PC-9 (cell line): ENCODE measurements at regions of chr14 and their contacts with region 1.

Region 1: DNA sequence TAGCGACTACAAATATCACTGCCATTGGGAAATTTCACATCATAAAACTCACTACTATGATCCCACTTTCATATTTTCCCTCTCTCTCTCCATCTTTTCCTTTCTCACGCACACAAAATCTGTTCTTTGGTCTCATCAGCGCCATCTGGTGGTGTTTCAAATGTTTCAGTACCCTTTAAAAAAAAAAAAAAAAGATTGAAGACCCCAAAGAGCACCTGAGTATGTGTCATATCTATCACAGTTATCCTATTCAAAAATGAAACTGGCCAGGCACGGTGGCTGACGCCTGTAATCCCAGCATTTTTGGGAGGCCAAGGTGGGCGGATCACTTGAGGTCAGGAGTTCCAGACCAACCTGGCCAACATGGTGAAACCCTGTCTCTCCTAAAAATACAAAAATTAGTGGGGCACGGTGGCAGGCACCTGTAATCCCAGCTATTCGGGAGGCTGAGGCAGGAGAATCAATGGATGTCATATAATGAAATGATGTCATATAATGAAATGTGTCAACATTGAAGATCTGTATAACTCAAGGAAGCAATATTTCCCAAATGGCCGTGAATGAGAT is 72.4 kb downstream of the TTC9 start:
- DNase-seq: peak; percentile 41 to 55
- H3K4me3 ChIP-seq: no peak overlapping the region
- H3K27ac ChIP-seq: peak overlapping the region; percentile 51; the same call in 1 of the 2 replicates
- H3K4me1 ChIP-seq: peaks cover 22% of the 10 kb centered on the region
- H3K27me3 ChIP-seq: no peaks in the 10 kb centered on the region
- CTCF ChIP-seq: peak; percentile 98

Region 2: DNA sequence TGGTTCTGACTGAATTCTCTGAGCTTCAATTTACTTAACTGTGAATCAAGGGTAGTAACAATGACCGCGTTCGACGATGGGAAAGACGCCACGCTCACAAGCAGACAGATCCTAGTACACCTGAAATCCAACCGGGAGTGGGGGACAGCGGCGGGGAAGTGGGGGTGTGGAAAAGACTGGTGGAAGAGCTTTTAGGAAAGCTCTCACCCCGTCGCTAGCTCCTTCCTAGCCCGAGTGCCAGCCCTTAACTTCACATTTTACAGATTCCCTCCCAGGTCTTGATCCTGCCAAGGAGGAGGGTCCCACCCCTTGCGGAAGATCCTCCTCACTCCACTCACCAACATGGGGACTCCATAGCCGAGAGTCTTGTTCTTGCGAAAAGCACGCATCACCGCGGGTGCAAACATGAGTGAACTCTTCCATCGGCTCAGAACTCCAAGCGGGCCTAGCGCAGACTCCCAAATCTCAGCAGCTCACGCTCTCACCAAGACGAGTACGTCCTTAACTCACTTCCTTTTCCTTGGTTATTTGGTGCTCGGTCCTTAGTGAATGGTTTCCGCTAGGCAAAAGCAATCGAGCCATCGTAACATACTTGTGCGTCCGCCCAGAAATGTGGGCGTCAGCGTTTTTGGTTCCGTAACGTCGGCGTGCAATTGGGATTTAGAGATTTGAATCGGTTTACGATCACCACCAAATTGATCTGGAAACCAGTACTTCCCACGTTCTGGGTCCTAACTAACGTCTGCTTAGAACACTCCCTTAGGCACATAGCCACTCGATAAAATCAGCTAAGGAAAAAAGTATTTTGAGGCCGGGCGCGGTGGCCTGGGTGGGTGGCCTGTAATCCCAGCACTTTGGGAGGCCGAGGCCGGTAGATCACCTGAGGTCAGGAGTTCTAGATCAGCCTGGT is 354.7 kb before region 1 on chr14 and contains the start of gene COX16:
- CTCF ChIA-PET with region 1: no interaction called
- POLR2A ChIA-PET with region 1: no interaction called
- intact Hi-C with region 1: loop called (anchors 5 kb)
- DNase-seq: peak; percentile 79 to 94
- H3K4me3 ChIP-seq: peak within 1 kb of the TSS; percentile 80
- H3K27ac ChIP-seq: peak within 1 kb of the TSS; percentile 69
- H3K4me1 ChIP-seq: peaks cover 15% of the 10 kb centered on the region; the same call in 1 of the 2 replicates
- H3K27me3 ChIP-seq: no peaks in the 10 kb centered on the region
- CTCF ChIP-seq: no peak
- total RNA-seq, gene COX16: 73.9 and 87.0 TPM in 2 replicates

Region 3: DNA sequence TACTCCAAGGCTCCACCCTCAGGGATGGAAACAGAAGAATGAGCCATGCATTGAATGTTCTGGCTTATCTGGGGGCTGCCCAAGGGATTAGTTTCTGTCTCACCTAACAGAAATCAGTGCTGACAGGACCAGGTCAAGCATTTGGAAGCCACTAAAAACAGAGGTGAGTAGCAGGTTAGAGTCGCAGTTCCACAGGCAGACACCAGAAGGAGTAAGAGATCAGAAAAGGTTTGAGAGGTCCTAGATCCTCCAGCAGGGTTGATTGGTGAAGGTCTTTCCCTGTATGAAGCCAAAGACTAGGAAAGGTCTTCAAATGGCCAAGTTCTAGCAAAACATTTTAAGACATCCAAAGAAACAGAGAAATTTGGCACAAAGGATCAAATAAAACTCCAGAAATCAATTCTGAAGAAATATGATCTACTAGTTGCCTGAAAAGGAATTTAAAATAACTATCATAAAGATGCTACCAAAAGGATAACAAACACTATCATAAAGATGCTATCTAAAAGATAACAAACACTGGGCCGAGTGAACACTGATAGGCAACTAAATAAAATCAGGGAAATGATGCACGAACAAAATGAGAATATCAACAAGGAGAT is 91.9 kb before region 1 on chr14:
- CTCF ChIA-PET with region 1: interaction called, 19 read pairs
- POLR2A ChIA-PET with region 1: no interaction called
- intact Hi-C with region 1: loop called (anchors 1 kb)
- DNase-seq: peak in 1 of 2 experiments; percentile 54
- H3K4me3 ChIP-seq: no peak overlapping the region
- H3K27ac ChIP-seq: no peak overlapping the region
- H3K4me1 ChIP-seq: peaks cover under 1% of the 10 kb centered on the region; the same call in 1 of the 2 replicates
- H3K27me3 ChIP-seq: no peaks in the 10 kb centered on the region
- CTCF ChIP-seq: peak; percentile 94

Region 4: DNA sequence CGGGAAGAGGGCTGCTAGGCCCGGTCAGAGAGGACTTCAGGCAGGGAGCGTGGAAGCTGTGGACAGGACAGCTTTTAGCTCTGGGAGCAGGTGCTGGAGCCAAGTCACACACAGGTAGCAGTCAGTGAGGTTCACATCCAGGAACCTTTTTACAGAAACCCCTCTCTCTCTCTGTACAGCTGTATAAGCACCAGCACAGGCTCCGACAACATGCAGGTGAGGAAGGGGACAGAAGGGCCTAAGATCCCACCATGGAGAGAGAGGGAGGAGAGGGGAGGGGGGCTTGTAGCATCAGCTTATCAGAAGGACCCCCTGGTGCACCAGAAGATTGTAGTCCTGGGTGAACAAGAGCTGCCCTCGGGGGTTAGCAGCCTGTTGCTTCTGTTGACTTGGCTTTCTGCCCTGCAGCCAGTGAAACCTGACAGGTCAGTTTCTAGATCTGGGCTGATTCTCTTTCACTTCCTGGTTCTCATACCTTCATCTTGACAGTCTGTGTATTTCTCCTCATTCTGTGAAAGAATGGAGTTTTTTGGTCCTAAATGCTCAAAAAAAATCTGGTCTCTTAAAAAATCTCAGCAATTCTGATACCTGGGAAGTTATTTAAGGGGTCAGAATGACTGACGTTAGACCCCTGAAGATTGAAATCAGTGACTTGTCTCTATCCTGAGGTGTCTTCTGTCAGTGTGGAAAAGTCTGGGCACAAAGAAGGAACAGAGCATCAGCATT is 48.8 kb before region 1 on chr14:
- CTCF ChIA-PET with region 1: interaction called, 7 read pairs
- POLR2A ChIA-PET with region 1: interaction called, 8 read pairs
- intact Hi-C with region 1: loop called (anchors 1 kb)
- DNase-seq: peak; percentile 93 to 96
- H3K4me3 ChIP-seq: peak overlapping the region; percentile 55
- H3K27ac ChIP-seq: peak overlapping the region; percentile 99
- H3K4me1 ChIP-seq: peaks cover 71% of the 10 kb centered on the region
- H3K27me3 ChIP-seq: no peaks in the 10 kb centered on the region
- CTCF ChIP-seq: 0 out of 2 replicates have a peak, but pooled peaks have one; percentile 13

Region 5: GRCh38 chr14:70754989-70755388 is 40.9 kb after region 1 on chr14:
- CTCF ChIA-PET with region 1: no interaction called
- POLR2A ChIA-PET with region 1: interaction called, 3 read pairs
- intact Hi-C with region 1: loop called (anchors 1 kb)
- DNase-seq: peak; percentile 96 to 99
- H3K4me3 ChIP-seq: no peak overlapping the region
- H3K27ac ChIP-seq: peak overlapping the region; percentile 87
- H3K4me1 ChIP-seq: peaks cover 36% of the 10 kb centered on the region
- H3K27me3 ChIP-seq: no peaks in the 10 kb centered on the region
- CTCF ChIP-seq: no peak

Region 6: GRCh38 chr14:71764701-71765382 is 1050.7 kb after region 1 on chr14:
- CTCF ChIA-PET with region 1: no interaction called
- POLR2A ChIA-PET with region 1: no interaction called
- intact Hi-C with region 1: no loop called
- DNase-seq: no peak
- H3K4me3 ChIP-seq: no peak overlapping the region
- H3K27ac ChIP-seq: no peak overlapping the region
- H3K4me1 ChIP-seq: no peaks in the 10 kb centered on the region
- H3K27me3 ChIP-seq: no peaks in the 10 kb centered on the region
- CTCF ChIP-seq: no peak